Ovary (tissue), 10 donors: ENCODE measurements at regions of chr11 and their contacts with region 1.

Region 1: GRCh38 chr11:120682866-120683265 is 171.3 kb downstream of the GRIK4 start:
- DNase-seq: no peak
- H3K4me3 ChIP-seq: no peak overlapping the region
- H3K27ac ChIP-seq: no peak overlapping the region
- H3K4me1 ChIP-seq: peaks cover 2% of the 10 kb centered on the region
- H3K27me3 ChIP-seq: no peaks in the 10 kb centered on the region
- CTCF ChIP-seq: no peak
- EP300 ChIP-seq: no peak
- POLR2A ChIP-seq: no peak

Region 2: DNA sequence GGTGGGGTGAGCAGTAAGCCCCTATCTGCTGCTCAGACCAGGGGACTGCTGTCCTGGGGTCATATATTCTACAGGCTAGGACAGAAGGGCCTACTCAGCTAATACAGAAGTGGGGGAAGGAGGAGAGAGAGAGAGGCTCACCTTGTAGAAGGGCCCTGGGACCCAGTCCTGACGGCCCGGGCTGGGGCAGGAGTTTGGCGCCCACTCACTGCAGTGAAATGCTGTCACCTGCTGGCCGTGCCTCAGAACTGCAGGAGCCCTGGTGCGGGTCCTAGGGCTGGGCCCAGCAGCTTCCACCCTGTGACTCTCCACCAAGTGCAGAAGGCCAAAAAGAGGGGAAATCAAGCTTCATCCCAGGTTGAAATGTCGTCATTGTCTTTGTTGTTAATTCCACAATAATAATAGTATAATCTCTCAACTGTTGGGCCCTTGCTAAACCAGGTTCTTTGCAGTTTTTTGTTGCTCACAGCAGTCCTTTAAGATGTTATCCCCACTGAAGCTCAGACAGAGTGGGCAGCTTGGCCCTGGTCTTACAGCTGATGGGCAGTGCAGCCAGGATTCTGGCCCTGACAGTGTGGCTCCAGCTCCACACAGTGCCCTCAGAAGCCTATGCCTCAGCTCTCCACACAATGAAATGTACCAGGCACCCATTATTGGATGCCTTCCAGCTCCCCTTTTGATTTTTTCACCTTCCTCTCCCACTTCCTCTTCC is 574.6 kb before region 1 on chr11:
- intact Hi-C with region 1: no loop called
- DNase-seq: peak; percentile 34 to 79 (median 66)
- H3K4me3 ChIP-seq: no peak overlapping the region
- H3K27ac ChIP-seq: no peak overlapping the region
- H3K4me1 ChIP-seq: no peaks in the 10 kb centered on the region
- H3K27me3 ChIP-seq: no peaks in the 10 kb centered on the region
- CTCF ChIP-seq: peak; percentile 75 to 95 (median 94)
- EP300 ChIP-seq: no peak
- POLR2A ChIP-seq: no peak

Region 3: GRCh38 chr11:120400564-120401364 is 282.1 kb before region 1 on chr11:
- intact Hi-C with region 1: loop called in 1 of 4 experiments (anchors 10 kb)
- DNase-seq: no peak
- H3K4me3 ChIP-seq: no peak overlapping the region
- H3K27ac ChIP-seq: no peak overlapping the region
- H3K4me1 ChIP-seq: no peaks in the 10 kb centered on the region
- H3K27me3 ChIP-seq: no peaks in the 10 kb centered on the region
- CTCF ChIP-seq: no peak
- EP300 ChIP-seq: no peak
- POLR2A ChIP-seq: no peak

Region 4: DNA sequence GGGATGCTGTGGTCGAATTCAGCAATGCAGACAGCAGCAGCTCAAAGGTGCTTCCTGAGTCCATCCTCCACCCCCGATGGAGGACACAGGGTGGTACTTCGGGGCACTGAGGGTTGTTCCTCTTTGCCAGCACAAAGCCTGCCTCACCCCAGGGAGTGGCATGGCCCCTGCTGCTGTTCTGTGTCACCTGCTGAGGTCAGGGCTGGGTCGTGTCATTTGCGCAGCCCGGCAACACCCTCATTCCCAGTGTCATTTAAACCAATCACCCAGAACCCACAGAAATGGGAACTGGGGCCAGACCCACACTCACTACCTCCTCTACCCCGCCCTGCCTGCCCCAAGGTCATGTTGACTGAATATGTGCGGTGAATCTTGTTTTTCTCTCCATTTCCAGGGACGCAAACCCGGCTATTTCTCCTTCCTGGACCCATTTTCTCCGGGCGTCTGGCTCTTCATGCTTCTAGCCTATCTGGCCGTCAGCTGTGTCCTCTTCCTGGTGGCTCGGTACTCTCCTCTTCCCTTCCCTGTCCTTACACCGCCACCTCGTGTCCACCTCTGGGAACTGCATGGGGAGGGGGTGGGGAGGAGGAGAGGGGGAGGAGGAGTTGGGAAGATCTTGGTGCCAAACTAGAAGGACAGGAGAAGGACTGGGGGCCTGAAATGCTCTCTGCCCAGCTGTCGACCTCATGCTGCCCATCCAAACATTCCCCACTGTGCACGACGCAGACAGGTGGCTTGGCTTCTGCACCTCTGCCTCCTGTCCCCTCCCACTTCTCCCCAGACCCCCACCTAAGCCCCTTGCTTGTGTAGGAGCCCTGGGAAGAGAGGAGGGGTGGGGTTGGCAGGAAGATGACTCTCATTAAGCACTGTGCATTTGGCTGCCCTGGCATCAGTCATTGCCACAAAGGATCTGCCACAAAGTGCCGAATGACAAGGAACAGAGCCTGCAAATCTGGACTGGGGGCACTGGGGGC is 269.9 kb after region 1 on chr11:
- intact Hi-C with region 1: loop called in 2 of 4 experiments (anchors 5 to 10 kb)
- DNase-seq: peak; percentile 74 to 85 (median 80)
- H3K4me3 ChIP-seq: no peak overlapping the region
- H3K27ac ChIP-seq: no peak overlapping the region
- H3K4me1 ChIP-seq: peaks cover 4% of the 10 kb centered on the region
- H3K27me3 ChIP-seq: no peaks in the 10 kb centered on the region
- CTCF ChIP-seq: peak in 2 of 3 donors; percentile 30 to 51
- EP300 ChIP-seq: no peak
- POLR2A ChIP-seq: no peak